Right ventricle myocardium inferior (tissue), 1 donor: ENCODE measurements at regions of chrX and their contacts with region 1.

Region 1: GRCh38 chrX:135973548-135974278 is at the start of gene MMGT1:
- DNase-seq: peak; percentile 89
- ATAC-seq: peak; percentile 94
- total RNA-seq, gene MMGT1: 22.4 TPM

Region 2: GRCh38 chrX:135985141-135985972 is 11.6 kb after region 1 on chrX and contains the start of gene SLC9A6:
- intact Hi-C with region 1: loop called (anchors 1 kb)
- DNase-seq: peak; percentile 87
- ATAC-seq: peak; percentile 97
- total RNA-seq, gene SLC9A6: 15.4 TPM